ENCODE measurements at regions of chr20 and their contacts with region 1.

Region 1: GRCh38 chr20:2849529-2849928 is 9.0 kb downstream of the VPS16 start:
- DNase-seq: no peak
- H3K4me3 Mint-ChIP-seq: no peak overlapping the region
- H3K27ac Mint-ChIP-seq: no peak overlapping the region
- H3K4me1 Mint-ChIP-seq: peaks cover 24% of the 10 kb centered on the region
- H3K27me3 Mint-ChIP-seq: no peaks in the 10 kb centered on the region

Region 2: GRCh38 chr20:2752567-2753460 is 96.7 kb before region 1 on chr20:
- intact Hi-C with region 1: loop called (anchors 5 kb)
- DNase-seq: peak; percentile 83
- H3K4me3 Mint-ChIP-seq: peak overlapping the region; percentile 79
- H3K27ac Mint-ChIP-seq: no peak overlapping the region
- H3K4me1 Mint-ChIP-seq: peaks cover 23% of the 10 kb centered on the region
- H3K27me3 Mint-ChIP-seq: peaks cover 52% of the 10 kb centered on the region